PC-9 (cell line): ENCODE measurements at regions of chr7 and their contacts with region 1.

Region 1: DNA sequence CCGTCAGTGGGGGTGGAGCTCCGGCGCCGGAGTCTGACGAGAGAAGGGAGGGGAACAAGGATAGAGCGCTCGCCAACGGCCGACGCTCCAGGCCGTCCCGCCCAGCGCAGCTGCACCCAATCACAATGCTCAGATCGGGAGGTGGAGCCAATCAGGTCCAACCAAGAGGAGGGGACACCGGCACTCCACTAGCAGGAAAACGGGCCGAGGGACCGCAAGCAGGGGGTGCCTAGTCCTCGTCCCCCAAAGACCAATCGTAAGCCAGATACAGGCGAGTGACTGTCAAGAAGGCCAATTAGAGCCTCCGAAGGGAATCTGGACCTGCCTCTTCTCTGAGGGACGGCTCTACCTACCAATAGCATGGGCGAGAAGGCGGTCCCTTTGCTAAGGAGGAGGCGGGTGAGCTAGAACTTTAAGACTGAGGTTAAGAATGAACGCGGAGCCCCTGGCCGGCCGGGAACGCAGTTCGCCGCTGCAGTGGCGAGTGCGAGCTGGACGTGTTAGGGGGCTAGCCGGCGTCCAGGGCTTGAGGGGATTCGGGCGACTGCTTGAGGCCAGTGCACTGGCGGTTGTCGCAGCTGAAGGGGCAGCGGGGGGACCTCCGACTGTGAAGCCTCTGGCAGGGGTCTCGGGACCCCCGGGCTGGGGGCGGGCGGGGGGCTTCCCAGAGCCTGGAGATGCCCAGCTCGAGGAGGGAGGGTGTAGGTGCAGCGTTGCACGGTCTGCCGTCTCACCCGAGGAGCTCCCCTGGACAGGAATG is at the start of gene FBXO24:
- DNase-seq: peak; percentile 99 to 100
- H3K4me3 ChIP-seq: peak within 1 kb of the TSS; percentile 60
- H3K27ac ChIP-seq: peak within 1 kb of the TSS; percentile 75
- H3K4me1 ChIP-seq: peaks cover 19% of the 10 kb centered on the region
- H3K27me3 ChIP-seq: no peaks in the 10 kb centered on the region
- CTCF ChIP-seq: no peak
- total RNA-seq, gene FBXO24: 2.7 and 4.6 TPM in 2 replicates

Region 2: DNA sequence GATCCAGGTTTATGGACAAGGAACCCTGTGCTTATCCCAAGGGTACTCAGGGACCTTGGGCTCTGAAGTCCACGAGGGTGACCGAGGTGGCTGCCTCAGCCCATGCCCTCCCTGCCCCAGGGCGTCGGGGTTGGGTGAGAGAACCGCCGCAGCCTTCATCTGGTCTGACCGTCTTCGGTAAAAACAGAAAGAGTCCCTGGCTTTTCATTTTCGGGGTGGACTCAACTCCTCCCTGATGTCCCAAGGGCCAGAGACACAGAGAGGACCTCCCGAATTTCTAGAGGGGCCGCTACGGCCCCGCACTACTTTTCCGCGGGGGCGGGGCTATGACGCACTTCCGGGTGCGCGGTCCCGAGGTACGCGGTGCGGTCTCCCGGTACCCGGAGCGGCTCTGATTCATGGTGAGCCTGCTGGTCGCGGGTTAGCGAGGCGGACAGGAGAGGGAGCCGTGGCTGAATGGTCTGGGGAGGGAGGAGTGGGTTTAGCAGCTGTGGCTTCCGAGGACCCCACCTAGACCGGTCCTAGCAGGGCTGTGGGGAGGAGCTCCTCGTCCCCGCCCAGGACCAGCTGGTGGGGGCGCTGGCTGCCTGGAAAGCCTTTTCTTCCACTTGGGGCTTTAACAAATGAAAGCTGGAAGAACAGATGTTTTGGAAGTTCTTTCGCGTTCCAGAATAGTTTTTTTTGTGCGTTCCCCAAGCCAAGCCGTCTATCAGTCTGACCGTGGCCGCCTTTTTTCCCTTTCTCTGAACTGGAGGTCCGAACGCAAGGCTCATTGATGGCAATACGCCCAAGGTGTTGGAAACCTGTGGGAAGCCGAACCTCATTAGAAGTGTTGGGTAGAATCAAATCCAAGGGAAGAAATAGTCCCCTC is 536.8 kb before region 1 on chr7 and contains the start of gene ZSCAN21:
- CTCF ChIA-PET with region 1: no interaction called
- POLR2A ChIA-PET with region 1: interaction called, 53 read pairs
- intact Hi-C with region 1: no loop called
- DNase-seq: peak; percentile 54 to 81
- H3K4me3 ChIP-seq: peak within 1 kb of the TSS; percentile 89
- H3K27ac ChIP-seq: peak within 1 kb of the TSS; percentile 65
- H3K4me1 ChIP-seq: peaks cover 9% of the 10 kb centered on the region; the same call in 1 of the 2 replicates
- H3K27me3 ChIP-seq: no peaks in the 10 kb centered on the region
- CTCF ChIP-seq: no peak; the same call in 1 of the 2 replicates
- total RNA-seq, gene ZSCAN21: 8.9 and 9.7 TPM in 2 replicates

Region 3: GRCh38 chr7:100545360-100546128 is 40.9 kb before region 1 on chr7:
- CTCF ChIA-PET with region 1: no interaction called
- POLR2A ChIA-PET with region 1: interaction called, 9 read pairs
- intact Hi-C with region 1: loop called (anchors 1 kb)
- DNase-seq: peak; percentile 89 to 96
- H3K4me3 ChIP-seq: peak overlapping the region; percentile 33; the same call in 1 of the 2 replicates
- H3K27ac ChIP-seq: peak overlapping the region; percentile 98
- H3K4me1 ChIP-seq: peaks cover 84% of the 10 kb centered on the region
- H3K27me3 ChIP-seq: no peaks in the 10 kb centered on the region
- CTCF ChIP-seq: no peak

Region 4: GRCh38 chr7:100568896-100569844 is 17.3 kb before region 1 on chr7:
- CTCF ChIA-PET with region 1: interaction called, 6 read pairs
- POLR2A ChIA-PET with region 1: interaction called, 10 read pairs
- intact Hi-C with region 1: loop called (anchors 1 kb)
- DNase-seq: no peak
- H3K4me3 ChIP-seq: no peak overlapping the region
- H3K27ac ChIP-seq: no peak overlapping the region
- H3K4me1 ChIP-seq: no peaks in the 10 kb centered on the region
- H3K27me3 ChIP-seq: no peaks in the 10 kb centered on the region
- CTCF ChIP-seq: no peak

Region 5: GRCh38 chr7:100655908-100656674 is 69.6 kb after region 1 on chr7 and contains the start of gene ACTL6B:
- CTCF ChIA-PET with region 1: no interaction called
- POLR2A ChIA-PET with region 1: interaction called, 10 read pairs
- intact Hi-C with region 1: no loop called
- DNase-seq: no peak
- H3K4me3 ChIP-seq: no peak within 1 kb of the TSS
- H3K27ac ChIP-seq: no peak within 1 kb of the TSS
- H3K4me1 ChIP-seq: peaks cover 7% of the 10 kb centered on the region
- H3K27me3 ChIP-seq: no peaks in the 10 kb centered on the region
- CTCF ChIP-seq: no peak
- total RNA-seq, gene ACTL6B: not detected in 2 replicates

Region 6: GRCh38 chr7:100827330-100828227 is 241.1 kb after region 1 on chr7 and contains the start of gene EPHB4:
- CTCF ChIA-PET with region 1: no interaction called
- POLR2A ChIA-PET with region 1: no interaction called
- intact Hi-C with region 1: loop called (anchors 10 kb)
- DNase-seq: peak in 1 of 2 experiments; percentile 85
- H3K4me3 ChIP-seq: peak within 1 kb of the TSS; percentile 68
- H3K27ac ChIP-seq: no peak within 1 kb of the TSS
- H3K4me1 ChIP-seq: peaks cover 12% of the 10 kb centered on the region; the same call in 1 of the 2 replicates
- H3K27me3 ChIP-seq: no peaks in the 10 kb centered on the region
- CTCF ChIP-seq: no peak; the same call in 1 of the 2 replicates
- total RNA-seq, gene EPHB4: 79.4 and 94.6 TPM in 2 replicates

Region 7: GRCh38 chr7:100889761-100890634 is 303.6 kb after region 1 on chr7:
- CTCF ChIA-PET with region 1: no interaction called
- POLR2A ChIA-PET with region 1: no interaction called
- intact Hi-C with region 1: no loop called
- DNase-seq: peak; percentile 77 to 96
- H3K4me3 ChIP-seq: peak overlapping the region; percentile 77
- H3K27ac ChIP-seq: peak overlapping the region; percentile 90
- H3K4me1 ChIP-seq: peaks cover 26% of the 10 kb centered on the region
- H3K27me3 ChIP-seq: 0 out of 2 replicates have a peak, but pooled peaks cover under 1% of the 10 kb centered on the region
- CTCF ChIP-seq: no peak